ENCODE measurements at regions of chr16 and their contacts with region 1.

Region 1: DNA sequence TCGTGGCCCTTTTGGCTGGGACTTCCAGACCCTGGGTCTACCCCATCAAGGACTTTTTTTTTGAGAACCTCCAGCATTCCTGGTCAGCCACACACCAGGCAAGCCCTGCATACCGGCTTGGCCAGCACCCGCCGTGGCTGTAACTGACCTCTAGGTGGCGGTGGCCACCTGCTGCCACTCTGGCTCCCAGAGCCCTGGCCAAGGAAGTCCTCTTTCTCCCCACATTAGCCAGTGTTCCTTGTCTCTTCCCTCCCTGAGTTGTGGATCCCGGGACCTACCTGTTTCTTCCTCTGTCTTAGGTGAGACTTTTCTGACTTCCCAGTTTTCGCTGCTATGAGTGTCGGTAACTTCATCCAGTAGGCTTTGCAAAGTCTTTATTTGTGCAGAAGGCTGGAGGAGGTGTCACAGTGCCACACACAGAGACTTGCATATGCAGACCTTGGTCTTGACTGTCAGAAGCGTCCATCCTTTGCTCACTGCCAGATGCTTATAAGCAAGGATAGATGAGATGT is 348.3 kb downstream of the CPPED1 start:
- DNase-seq: peak; percentile 82
- H3K4me3 Mint-ChIP-seq: no peak overlapping the region
- H3K27ac Mint-ChIP-seq: no peak overlapping the region
- H3K4me1 Mint-ChIP-seq: peaks cover 5% of the 10 kb centered on the region
- H3K27me3 Mint-ChIP-seq: no peaks in the 10 kb centered on the region
- CTCF ChIP-seq: peak; percentile 92

Region 2: DNA sequence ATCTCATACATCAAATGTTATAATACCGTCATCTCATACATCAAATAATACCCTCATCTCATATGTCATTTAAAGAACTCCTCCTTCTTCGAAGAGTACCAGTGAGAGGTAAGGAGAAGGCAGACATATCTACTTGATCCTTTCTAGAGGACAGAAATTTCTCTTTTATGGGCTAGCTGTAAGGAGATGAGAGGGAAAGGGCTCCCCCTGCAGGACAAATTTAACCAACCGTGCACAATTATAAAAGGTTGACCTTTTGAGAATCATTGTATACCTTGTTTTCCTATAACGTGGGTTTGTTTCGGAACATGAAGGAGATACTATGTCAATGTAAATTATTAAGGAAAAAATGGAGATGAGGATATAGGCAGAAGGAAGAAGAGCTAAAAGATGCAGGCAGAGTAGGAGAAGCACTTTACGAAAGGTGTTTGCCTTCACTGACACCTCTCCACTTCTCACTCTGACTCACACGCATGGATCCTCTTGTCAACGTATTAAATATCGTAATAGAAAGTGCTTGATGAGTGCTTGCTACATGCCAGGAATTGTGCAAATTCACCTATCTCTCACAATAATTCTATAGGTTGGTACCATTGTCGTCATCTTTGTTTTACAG is 998.7 kb after region 1 on chr16:
- CTCF ChIA-PET with region 1: no interaction called
- intact Hi-C with region 1: loop called (anchors 1 kb)
- DNase-seq: peak; percentile 52
- H3K4me3 Mint-ChIP-seq: no peak overlapping the region
- H3K27ac Mint-ChIP-seq: no peak overlapping the region
- H3K4me1 Mint-ChIP-seq: no peaks in the 10 kb centered on the region
- H3K27me3 Mint-ChIP-seq: no peaks in the 10 kb centered on the region
- CTCF ChIP-seq: peak; percentile 61

Measured in Calu3 (cell line).